Naive thymus-derived CD4-positive, alpha-beta T cell (primary cell): ENCODE measurements at regions of chr9 and their contacts with region 1.

Region 1: DNA sequence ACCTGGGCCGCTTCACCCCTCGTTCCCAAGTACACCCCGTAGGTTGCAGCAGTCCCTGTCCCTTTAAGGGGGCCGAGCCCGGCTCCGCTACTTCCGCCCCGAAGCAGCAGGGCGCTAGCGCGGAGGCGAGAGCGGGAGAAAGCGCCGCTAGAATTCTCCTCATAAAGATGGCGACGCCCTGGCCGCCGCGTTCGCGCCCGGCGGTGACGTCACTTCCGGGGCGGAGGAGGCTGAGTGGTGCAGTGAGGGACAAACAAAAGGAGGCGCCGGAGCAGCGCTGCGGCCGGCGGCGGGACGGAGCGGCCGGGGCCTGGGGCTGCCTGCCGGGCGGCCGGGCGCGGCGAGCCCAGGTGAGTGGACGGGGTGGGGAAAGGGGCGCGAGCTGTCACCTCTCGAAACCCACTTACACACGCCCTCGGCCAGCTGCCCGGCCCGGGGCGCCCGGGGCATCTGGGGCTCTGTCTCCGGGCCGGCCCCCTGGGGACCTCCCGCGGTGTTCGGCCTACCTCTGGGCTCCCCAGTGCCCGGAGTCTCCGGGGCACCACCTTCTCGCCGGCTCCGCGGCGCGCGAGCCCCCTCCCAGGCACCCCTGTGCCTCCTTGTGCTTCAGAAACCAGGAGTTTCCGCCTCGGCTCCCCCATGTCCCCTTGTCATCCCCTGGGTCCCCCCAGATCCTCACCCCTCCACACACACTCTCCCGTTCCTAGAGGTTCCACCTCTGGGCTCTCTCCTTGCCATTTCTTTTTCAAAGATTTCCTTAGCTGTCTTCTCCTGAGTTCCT is at the starts of genes KYAT1 and LRRC8A:
- DNase-seq: peak; percentile 95 to 99 (median 97)
- ATAC-seq: peak; percentile 95
- H3K4me3 ChIP-seq: peak within 1 kb of the TSS; percentile 94
- H3K4me3 Mint-ChIP-seq: peak within 1 kb of the TSS; percentile 97 to 99 (median 98)
- H3K27ac ChIP-seq: peak within 1 kb of the TSS; percentile 95
- H3K27ac Mint-ChIP-seq: peak within 1 kb of the TSS; percentile 94 to 99 (median 97)
- H3K4me1 ChIP-seq: peaks cover 24 to 25% of the 10 kb centered on the region in 2 donors
- H3K4me1 Mint-ChIP-seq: peaks cover 45 to 79% (median 61%) of the 10 kb centered on the region in 7 donors
- H3K27me3 ChIP-seq: no peaks in the 10 kb centered on the region
- H3K27me3 Mint-ChIP-seq: no peaks in the 10 kb centered on the region
- total RNA-seq, gene KYAT1: 7.2 to 18.2 (median 14.8) TPM
- total RNA-seq, gene LRRC8A: 31.3 to 48.8 (median 34.5) TPM

Region 2: GRCh38 chr9:128275996-128276573 is 606.0 kb before region 1 on chr9 and contains the starts of genes GOLGA2 and SWI5:
- CTCF ChIA-PET with region 1: no interaction called
- POLR2A ChIA-PET with region 1: no interaction called
- intact Hi-C with region 1: loop called (anchors 5 kb)
- DNase-seq: peak; percentile 98 to 100 (median 100)
- ATAC-seq: peak; percentile 98
- H3K4me3 ChIP-seq: peak within 1 kb of the TSS; percentile 95
- H3K4me3 Mint-ChIP-seq: peak within 1 kb of the TSS; percentile 94 to 98 (median 96)
- H3K27ac ChIP-seq: peak within 1 kb of the TSS; percentile 90
- H3K27ac Mint-ChIP-seq: peak within 1 kb of the TSS; percentile 94 to 98 (median 97)
- H3K4me1 ChIP-seq: peaks cover 16 to 21% of the 10 kb centered on the region in 2 donors
- H3K4me1 Mint-ChIP-seq: peaks cover 24 to 51% (median 46%) of the 10 kb centered on the region in 7 donors
- H3K27me3 ChIP-seq: no peaks in the 10 kb centered on the region
- H3K27me3 Mint-ChIP-seq: peaks cover 0 to 7% (median 0%) of the 10 kb centered on the region in 5 donors
- total RNA-seq, gene GOLGA2: 56.5 to 76.6 (median 70.6) TPM
- total RNA-seq, gene SWI5: 8.7 to 17.4 (median 9.8) TPM

Region 3: DNA sequence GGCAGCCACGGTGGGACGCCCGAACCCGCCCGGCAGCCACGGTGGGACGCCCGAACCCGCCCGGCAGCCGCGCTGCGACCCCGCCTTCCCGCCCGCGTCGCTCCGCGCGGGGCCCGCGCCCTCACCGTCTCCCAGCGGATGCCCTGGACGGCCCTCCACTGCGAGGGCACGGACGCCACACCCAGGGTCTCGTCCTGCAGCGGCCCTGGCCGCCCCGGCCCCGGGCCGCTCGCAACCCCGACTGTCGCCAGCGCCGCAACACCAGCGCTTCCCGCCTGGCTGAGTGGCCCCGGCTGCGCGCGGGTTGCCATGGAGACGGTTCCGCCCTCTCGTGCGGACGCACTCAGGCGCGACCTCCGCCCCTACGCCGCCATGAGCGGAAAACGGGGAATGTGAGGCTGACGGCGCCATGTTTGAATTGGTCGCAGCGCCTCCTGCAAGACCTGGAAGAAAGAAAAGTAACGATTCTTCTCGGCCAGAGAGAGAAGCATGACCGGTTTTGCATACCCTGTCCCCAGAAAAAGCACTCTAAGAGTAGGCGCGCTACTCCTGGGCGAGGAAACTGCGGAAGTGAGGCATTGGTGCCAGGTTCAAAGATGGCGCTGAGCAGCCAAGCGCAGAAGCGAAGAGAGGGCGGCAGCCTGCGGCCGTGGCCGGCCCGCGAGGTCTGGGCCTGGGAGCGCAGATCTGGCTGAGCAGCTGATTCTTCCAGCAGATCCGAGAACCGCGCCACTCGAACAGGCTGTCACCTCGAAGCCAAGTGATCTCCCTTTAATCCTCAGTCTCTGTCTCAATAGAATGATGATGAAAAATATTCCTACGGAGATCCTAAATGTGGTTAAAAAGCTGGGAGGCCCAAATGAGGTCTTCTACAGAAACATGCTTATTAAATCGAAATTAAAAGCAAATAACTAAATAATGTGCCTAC is 225.4 kb before region 1 on chr9 and contains the start of gene DYNC2I2:
- CTCF ChIA-PET with region 1: no interaction called
- POLR2A ChIA-PET with region 1: no interaction called
- intact Hi-C with region 1: loop called in 1 of 2 experiments (anchors 2 kb)
- DNase-seq: peak; percentile 91 to 96 (median 96)
- ATAC-seq: peak; percentile 98
- H3K4me3 ChIP-seq: peak within 1 kb of the TSS; percentile 96
- H3K4me3 Mint-ChIP-seq: peak within 1 kb of the TSS; percentile 88 to 98 (median 94)
- H3K27ac ChIP-seq: peak within 1 kb of the TSS; percentile 99
- H3K27ac Mint-ChIP-seq: peak within 1 kb of the TSS; percentile 95 to 100 (median 99)
- H3K4me1 ChIP-seq: peaks cover 3 to 9% of the 10 kb centered on the region in 2 donors
- H3K4me1 Mint-ChIP-seq: peaks cover 0 to 14% (median 7%) of the 10 kb centered on the region in 7 donors
- H3K27me3 ChIP-seq: no peaks in the 10 kb centered on the region
- H3K27me3 Mint-ChIP-seq: no peaks in the 10 kb centered on the region
- total RNA-seq, gene DYNC2I2: 2.5 to 41.7 (median 3.8) TPM

Region 4: GRCh38 chr9:128689820-128690692 is 192.0 kb before region 1 on chr9:
- CTCF ChIA-PET with region 1: no interaction called
- POLR2A ChIA-PET with region 1: no interaction called
- intact Hi-C with region 1: no loop called
- DNase-seq: peak; percentile 23 to 62 (median 45)
- ATAC-seq: peak; percentile 33
- H3K4me3 ChIP-seq: peak overlapping the region; percentile 84
- H3K4me3 Mint-ChIP-seq: peak overlapping the region; percentile 87 to 100 (median 98)
- H3K27ac ChIP-seq: peak overlapping the region; percentile 85
- H3K27ac Mint-ChIP-seq: peak overlapping the region; percentile 83 to 100 (median 93)
- H3K4me1 ChIP-seq: peaks cover 16 to 43% of the 10 kb centered on the region in 2 donors
- H3K4me1 Mint-ChIP-seq: peaks cover 35 to 56% (median 52%) of the 10 kb centered on the region in 7 donors
- H3K27me3 ChIP-seq: no peaks in the 10 kb centered on the region
- H3K27me3 Mint-ChIP-seq: no peaks in the 10 kb centered on the region

Region 5: GRCh38 chr9:128818099-128818838 is 63.8 kb before region 1 on chr9 and contains the start of gene ENDOG:
- CTCF ChIA-PET with region 1: interaction called, 3 read pairs
- POLR2A ChIA-PET with region 1: interaction called, 3 read pairs
- intact Hi-C with region 1: loop called in 1 of 2 experiments (anchors 2 kb)
- DNase-seq: peak; percentile 94 to 99 (median 97)
- ATAC-seq: peak; percentile 98
- H3K4me3 ChIP-seq: peak within 1 kb of the TSS; percentile 67
- H3K4me3 Mint-ChIP-seq: peak within 1 kb of the TSS; percentile 84 to 92 (median 91)
- H3K27ac ChIP-seq: peak within 1 kb of the TSS; percentile 72
- H3K27ac Mint-ChIP-seq: peak within 1 kb of the TSS; percentile 79 to 94 (median 87)
- H3K4me1 ChIP-seq: no peaks in the 10 kb centered on the region
- H3K4me1 Mint-ChIP-seq: peaks cover 7 to 29% (median 12%) of the 10 kb centered on the region in 7 donors
- H3K27me3 ChIP-seq: no peaks in the 10 kb centered on the region
- H3K27me3 Mint-ChIP-seq: no peaks in the 10 kb centered on the region
- total RNA-seq, gene ENDOG: 9.4 to 18.3 (median 14.7) TPM

Region 6: DNA sequence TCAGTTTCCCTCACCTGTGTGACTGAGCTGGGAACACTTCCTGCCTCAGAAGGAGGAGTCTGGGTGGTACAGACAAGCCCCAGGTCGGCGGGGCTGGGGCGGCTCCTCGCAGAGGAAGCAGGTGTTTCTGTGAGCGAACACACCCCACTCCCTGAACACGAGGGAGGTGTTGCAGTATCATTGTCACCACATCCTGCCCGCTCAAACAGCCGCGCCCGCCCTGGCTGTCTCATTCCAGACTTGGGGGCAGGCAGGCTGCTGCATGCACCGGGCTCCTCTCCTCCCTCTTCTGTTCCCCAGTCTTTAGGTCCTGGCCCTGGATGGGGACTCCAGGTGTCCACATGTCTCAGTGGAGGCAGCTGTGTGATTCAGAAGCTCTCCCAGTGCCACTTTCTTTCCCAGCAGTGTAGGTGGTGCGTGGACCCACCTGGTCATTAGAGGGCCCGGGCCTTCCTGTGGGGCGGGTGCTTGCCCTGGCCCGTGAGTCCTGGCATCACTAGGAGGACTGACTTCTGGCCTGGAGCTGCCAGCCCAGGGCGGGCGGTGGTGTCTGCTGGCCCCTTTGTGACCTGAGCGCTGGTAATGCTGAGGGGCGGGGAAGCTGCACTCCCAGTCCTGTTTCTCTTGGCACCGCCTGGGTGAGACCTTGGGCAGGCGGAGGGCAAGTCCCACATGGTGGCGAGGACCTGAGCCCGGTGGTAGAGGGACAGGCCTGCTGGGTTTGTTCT is 20.4 kb after region 1 on chr9:
- CTCF ChIA-PET with region 1: interaction called, 5 read pairs
- POLR2A ChIA-PET with region 1: interaction called, 32 read pairs
- intact Hi-C with region 1: loop called (anchors 1 kb)
- DNase-seq: peak; percentile 61 to 93 (median 90)
- ATAC-seq: peak; percentile 95
- H3K4me3 ChIP-seq: peak overlapping the region; percentile 55
- H3K4me3 Mint-ChIP-seq: peak overlapping the region; percentile 76 to 87 (median 84)
- H3K27ac ChIP-seq: peak overlapping the region; percentile 89
- H3K27ac Mint-ChIP-seq: peak overlapping the region; percentile 85 to 98 (median 96)
- H3K4me1 ChIP-seq: peaks cover 64 to 65% of the 10 kb centered on the region in 2 donors
- H3K4me1 Mint-ChIP-seq: peaks cover 32 to 84% (median 73%) of the 10 kb centered on the region in 7 donors
- H3K27me3 ChIP-seq: no peaks in the 10 kb centered on the region
- H3K27me3 Mint-ChIP-seq: no peaks in the 10 kb centered on the region

Region 7: DNA sequence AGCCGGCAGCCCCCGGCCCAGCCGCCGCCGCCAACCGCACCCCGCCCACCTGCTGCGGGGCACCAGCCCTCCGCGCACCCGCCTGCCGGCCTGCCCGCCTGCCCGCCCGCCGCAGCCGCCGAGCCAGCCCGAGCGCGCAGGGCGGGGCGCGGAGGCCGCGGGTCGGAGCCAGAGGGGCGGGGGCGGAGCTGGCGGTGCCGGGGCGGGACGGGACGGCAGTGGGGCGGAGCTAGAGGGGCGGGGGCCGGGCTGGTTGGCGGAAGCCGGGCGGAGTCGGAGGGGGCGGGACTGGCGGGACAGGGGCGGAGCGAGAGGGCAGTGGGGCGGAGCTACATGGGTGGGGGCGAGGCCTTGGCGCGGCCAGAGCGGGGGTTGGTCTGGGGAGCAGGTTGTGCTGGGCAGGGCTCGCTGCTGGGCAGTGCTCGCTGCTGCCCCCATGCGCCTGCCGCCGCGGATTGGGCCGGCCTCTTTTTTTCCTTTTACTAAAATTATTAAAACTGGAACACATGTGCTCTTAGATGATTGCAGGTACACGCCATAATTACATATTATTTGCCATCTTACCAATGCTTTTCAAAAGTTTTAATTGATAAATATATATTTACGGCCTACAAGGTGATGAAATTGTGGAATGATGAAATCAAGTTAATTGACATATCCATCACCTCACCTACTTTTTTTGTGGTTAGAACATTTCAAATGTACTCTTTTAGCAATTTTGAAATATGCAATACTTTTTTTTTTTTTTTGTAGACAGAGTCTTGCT is 146.3 kb after region 1 on chr9 and contains the start of gene SH3GLB2:
- CTCF ChIA-PET with region 1: no interaction called
- POLR2A ChIA-PET with region 1: no interaction called
- intact Hi-C with region 1: loop called (anchors 2 kb)
- DNase-seq: peak in 8 of 9 donors; percentile 81 to 97 (median 88)
- ATAC-seq: peak; percentile 94
- H3K4me3 ChIP-seq: peak within 1 kb of the TSS; percentile 76
- H3K4me3 Mint-ChIP-seq: peak within 1 kb of the TSS; percentile 81 to 92 (median 83)
- H3K27ac ChIP-seq: peak within 1 kb of the TSS; percentile 72
- H3K27ac Mint-ChIP-seq: peak within 1 kb of the TSS; percentile 62 to 90 (median 78)
- H3K4me1 ChIP-seq: peaks cover 13 to 18% of the 10 kb centered on the region in 2 donors
- H3K4me1 Mint-ChIP-seq: peaks cover 13 to 37% (median 25%) of the 10 kb centered on the region in 7 donors
- H3K27me3 ChIP-seq: no peaks in the 10 kb centered on the region
- H3K27me3 Mint-ChIP-seq: no peaks in the 10 kb centered on the region
- total RNA-seq, gene SH3GLB2: 76.3 to 106 (median 86.2) TPM